ENCODE measurements at regions of chr7 and their contacts with region 1.

Region 1: GRCh38 chr7:116525913-116526861 is 1.4 kb downstream of the CAV1 start:
- DNase-seq: peak; percentile 85
- H3K4me3 Mint-ChIP-seq: peak overlapping the region; percentile 99
- H3K27ac Mint-ChIP-seq: peak overlapping the region; percentile 90
- H3K4me1 Mint-ChIP-seq: peaks cover 39% of the 10 kb centered on the region
- H3K27me3 Mint-ChIP-seq: no peaks in the 10 kb centered on the region
- CTCF ChIP-seq: peak; percentile 81

Region 2: DNA sequence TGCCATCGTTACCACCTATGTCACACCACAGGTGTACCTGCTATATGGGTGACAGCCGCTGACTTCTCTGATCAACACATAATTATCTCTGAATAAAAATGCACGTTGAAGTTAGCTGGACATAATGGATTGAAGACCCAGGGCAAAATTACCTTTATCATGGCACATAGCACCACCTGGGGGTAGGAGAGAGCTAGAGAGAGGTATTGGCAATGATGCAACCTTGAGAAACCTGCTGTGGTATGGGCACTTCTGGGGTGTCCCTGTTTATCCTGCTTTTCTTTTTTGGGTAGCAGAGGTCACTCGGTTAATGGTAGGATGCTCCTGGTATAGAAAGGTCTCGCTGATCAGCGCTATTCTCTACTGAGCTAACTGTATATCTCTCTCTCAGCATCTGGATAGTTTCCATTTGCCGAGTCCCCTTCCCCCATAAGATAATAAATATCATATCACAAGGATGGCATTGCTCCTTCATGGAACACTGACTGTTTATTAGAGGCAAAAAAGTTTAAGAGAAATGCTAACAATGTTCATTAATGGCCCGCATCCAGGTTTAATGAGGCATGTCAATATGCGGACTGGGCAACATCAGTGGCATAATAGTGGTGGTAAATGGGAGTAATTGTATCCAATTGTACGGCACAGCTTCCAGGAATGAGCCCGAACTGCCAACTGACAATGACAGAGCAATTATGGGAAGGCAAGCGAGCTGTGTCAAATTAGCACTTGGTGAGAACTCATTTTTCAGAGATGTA is 818.8 kb before region 1 on chr7:
- CTCF ChIA-PET with region 1: no interaction called
- POLR2A ChIA-PET with region 1: no interaction called
- intact Hi-C with region 1: no loop called
- DNase-seq: peak; percentile 32
- H3K4me3 Mint-ChIP-seq: no peak overlapping the region
- H3K27ac Mint-ChIP-seq: no peak overlapping the region
- H3K4me1 Mint-ChIP-seq: no peaks in the 10 kb centered on the region
- H3K27me3 Mint-ChIP-seq: peaks cover 44% of the 10 kb centered on the region
- CTCF ChIP-seq: peak; percentile 31

Region 3: DNA sequence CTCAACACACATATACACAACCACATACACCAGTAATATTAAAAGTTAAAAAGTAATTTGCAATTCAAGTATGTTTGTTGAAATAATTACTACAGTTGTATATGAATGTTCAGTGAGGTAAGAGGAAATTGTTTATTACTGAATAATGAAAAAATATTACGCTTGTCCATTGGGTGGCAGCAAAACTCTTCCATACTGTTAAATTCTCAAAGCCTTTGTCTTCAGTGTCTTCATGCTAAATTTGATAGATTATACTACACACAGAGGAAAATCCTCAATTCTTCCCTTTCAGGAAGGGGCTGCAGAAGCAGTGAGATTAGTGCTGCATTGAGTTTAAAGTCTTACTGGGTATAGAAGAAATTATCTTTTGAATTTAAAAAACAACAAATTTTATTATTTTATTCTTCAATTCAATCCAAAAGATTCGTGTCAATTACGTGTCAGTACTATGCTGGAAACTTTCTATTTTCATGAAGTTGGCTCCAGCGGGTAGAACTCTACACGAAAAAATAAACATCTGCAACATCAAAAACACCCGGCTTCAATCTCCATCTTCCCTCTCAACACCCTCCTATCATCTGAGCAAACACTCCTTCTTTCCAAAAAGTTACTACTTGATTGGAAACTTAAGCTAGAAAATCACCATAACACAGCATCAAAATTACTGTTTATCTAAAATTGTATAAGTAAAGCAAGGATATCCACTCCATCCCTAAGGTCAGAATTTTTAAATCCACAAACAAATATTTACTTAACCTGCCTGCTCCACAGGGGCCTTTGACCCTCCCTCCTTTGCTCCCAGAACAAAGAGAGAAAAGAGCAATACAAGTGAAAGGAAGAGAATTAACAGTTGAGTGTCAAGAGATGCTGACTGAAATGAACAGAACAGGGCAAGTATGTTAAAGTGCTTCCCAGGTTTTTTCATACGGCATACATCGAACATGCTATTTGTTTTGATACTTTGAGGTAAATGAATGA is 352.8 kb before region 1 on chr7:
- CTCF ChIA-PET with region 1: interaction called, 5 read pairs
- POLR2A ChIA-PET with region 1: interaction called, 7 read pairs
- intact Hi-C with region 1: loop called (anchors 2 kb)
- DNase-seq: peak; percentile 65
- H3K4me3 Mint-ChIP-seq: no peak overlapping the region
- H3K27ac Mint-ChIP-seq: no peak overlapping the region
- H3K4me1 Mint-ChIP-seq: peaks cover 23% of the 10 kb centered on the region
- H3K27me3 Mint-ChIP-seq: peaks cover 20% of the 10 kb centered on the region
- CTCF ChIP-seq: peak; percentile 56

Region 4: DNA sequence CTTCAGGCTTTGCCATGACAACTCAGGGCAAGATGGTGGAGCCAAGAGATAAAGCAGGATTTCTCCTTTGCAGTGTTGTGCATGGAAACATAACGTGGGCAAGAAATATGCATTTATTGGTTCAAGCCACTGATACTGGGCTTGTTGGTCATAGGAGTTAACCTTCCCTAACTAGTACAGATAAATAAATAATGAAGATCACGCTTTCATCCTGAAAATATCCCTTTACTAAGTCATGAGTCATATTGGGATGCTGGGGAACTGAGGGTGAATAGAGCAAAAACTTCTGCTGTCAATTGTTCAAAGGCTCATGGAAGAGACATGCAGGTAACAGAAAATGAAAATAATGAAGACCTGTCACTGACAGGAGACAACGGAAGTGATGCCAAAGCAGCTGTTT is 260.3 kb before region 1 on chr7:
- CTCF ChIA-PET with region 1: interaction called, 108 read pairs
- POLR2A ChIA-PET with region 1: interaction called, 128 read pairs
- intact Hi-C with region 1: no loop called
- DNase-seq: no peak
- H3K4me3 Mint-ChIP-seq: no peak overlapping the region
- H3K27ac Mint-ChIP-seq: no peak overlapping the region
- H3K4me1 Mint-ChIP-seq: peaks cover 49% of the 10 kb centered on the region
- H3K27me3 Mint-ChIP-seq: no peaks in the 10 kb centered on the region
- CTCF ChIP-seq: no peak

Region 5: GRCh38 chr7:116443101-116443523 is 83.1 kb before region 1 on chr7:
- CTCF ChIA-PET with region 1: interaction called, 16 read pairs
- POLR2A ChIA-PET with region 1: interaction called, 39 read pairs
- intact Hi-C with region 1: loop called (anchors 1 kb)
- DNase-seq: peak; percentile 93
- H3K4me3 Mint-ChIP-seq: peak overlapping the region; percentile 6
- H3K27ac Mint-ChIP-seq: peak overlapping the region; percentile 93
- H3K4me1 Mint-ChIP-seq: peaks cover 38% of the 10 kb centered on the region
- H3K27me3 Mint-ChIP-seq: no peaks in the 10 kb centered on the region
- CTCF ChIP-seq: no peak

Region 6: GRCh38 chr7:116552602-116553001 is 26.4 kb after region 1 on chr7:
- CTCF ChIA-PET with region 1: interaction called, 11 read pairs
- POLR2A ChIA-PET with region 1: interaction called, 6 read pairs
- intact Hi-C with region 1: no loop called
- DNase-seq: peak; percentile 39
- H3K4me3 Mint-ChIP-seq: no peak overlapping the region
- H3K27ac Mint-ChIP-seq: peak overlapping the region; percentile 46
- H3K4me1 Mint-ChIP-seq: peaks cover 44% of the 10 kb centered on the region
- H3K27me3 Mint-ChIP-seq: no peaks in the 10 kb centered on the region
- CTCF ChIP-seq: no peak

Region 7: DNA sequence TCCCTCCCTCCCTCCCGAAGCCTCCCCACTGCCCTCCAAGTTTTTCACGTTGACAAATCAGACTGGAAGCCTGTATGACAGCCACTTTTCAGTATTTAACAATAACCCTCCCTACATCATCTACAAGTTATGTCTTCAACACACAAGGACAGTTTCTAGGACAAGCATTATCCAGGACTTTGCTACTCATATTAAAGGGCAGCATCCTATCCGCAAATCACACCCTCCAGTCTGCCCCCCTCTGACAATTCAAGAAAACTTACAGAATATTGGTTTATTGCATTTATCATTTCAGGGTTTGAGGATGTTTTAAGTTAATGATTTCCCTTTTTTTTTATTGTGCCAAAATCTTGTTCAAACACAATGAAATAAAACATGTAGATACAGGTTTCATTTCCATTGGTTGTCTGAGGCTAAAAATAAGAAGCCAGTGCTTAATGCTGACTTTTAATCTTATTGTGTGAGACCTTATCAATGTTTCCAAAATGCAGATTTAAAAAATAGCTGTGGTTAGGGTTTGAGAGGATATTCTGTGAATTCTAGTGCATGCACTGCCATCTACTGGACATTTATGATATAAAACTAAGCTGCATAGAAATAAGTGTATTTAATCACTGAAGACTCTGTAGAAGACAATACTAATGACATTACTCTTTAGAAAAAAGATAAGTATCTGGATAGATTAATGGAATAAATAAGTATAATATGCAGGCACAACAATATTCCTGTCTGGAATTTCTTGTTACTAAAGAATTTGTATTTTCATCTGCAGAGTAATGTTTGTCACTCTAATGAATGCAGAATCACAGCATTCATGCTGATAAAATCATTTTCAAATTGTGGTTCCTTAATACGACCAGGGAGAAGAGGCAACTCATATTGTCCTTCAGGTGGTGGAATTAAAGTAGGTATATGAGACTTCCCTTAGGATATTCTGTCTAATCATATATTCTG is 62.7 kb after region 1 on chr7:
- CTCF ChIA-PET with region 1: interaction called, 48 read pairs
- POLR2A ChIA-PET with region 1: interaction called, 21 read pairs
- intact Hi-C with region 1: loop called (anchors 1 kb)
- DNase-seq: peak; percentile 64
- H3K4me3 Mint-ChIP-seq: no peak overlapping the region
- H3K27ac Mint-ChIP-seq: peak overlapping the region; percentile 85
- H3K4me1 Mint-ChIP-seq: peaks cover 16% of the 10 kb centered on the region
- H3K27me3 Mint-ChIP-seq: peaks cover 10% of the 10 kb centered on the region
- CTCF ChIP-seq: peak; percentile 57

Measured in MCF 10A (cell line).